ENCODE measurements at regions of chr9 and their contacts with region 1.

Region 1: DNA sequence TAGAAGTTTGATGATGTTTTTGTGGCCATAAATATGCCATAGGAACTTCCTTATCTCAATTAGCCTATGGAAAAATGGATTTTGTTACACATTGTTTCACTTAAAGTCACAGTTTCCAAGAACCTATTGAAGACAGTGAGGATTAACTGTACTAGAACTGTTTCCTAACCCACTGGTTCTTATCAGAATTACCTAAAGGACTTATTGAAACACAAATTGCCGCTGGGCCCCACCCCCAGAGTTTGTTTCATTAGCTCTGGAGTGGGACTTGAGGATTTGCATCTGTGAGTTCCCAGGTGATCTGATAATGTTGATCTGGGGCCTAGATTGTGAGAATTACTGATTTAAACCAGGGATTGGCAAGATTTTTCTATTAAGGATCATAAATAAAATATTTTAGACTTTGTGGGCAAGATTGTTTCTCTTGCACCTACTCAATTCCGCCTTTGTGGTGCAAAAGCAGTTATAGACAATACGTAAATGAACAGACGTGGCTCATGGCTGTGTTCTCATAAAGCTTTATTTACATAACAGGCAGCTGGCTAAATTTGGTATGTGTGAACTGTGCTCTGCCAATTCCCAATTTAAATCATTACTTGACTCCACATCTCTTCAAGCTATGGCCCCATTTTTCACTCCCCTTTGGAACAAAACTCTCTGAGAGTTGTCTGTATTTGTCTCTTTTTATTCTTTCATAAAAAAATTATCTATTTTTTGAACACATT is 9.3 kb downstream of the JAK2 start:
- DNase-seq: no peak
- ATAC-seq: no peak
- H3K4me3 ChIP-seq: no peak overlapping the region
- H3K27ac ChIP-seq: no peak overlapping the region
- H3K4me1 ChIP-seq: peaks cover 0 to 6% (median 0%) of the 10 kb centered on the region in 4 donors
- H3K27me3 ChIP-seq: no peaks in the 10 kb centered on the region
- CTCF ChIP-seq: no peak
- POLR2A ChIP-seq: no peak

Region 2: GRCh38 chr9:4755026-4755609 is 239.2 kb before region 1 on chr9:
- intact Hi-C with region 1: loop called in 1 of 2 experiments (anchors 5 kb)
- DNase-seq: no peak
- ATAC-seq: no peak
- H3K4me3 ChIP-seq: no peak overlapping the region
- H3K27ac ChIP-seq: no peak overlapping the region
- H3K4me1 ChIP-seq: no peaks in the 10 kb centered on the region
- H3K27me3 ChIP-seq: no peaks in the 10 kb centered on the region
- CTCF ChIP-seq: no peak
- POLR2A ChIP-seq: no peak

Region 3: DNA sequence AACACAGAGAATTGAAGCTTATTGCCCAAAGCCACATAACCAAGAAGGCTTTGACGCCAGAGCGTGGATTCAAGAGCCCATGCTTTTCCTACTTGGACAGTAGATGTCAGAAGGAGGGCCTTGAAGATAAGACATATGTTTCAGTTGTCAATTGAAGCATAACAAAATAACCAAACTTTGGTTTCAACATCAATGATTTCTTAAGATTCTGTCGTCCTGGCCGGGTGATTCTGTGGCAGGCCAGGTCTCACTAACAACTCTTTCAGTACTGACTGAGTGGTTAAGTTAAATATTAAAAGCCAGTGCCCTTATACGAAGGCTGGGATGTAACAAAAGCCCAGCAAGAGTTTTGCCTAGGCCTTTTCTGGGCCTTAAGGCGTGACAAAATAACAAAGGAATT is 107.6 kb before region 1 on chr9:
- intact Hi-C with region 1: no loop called
- DNase-seq: no peak
- ATAC-seq: no peak
- H3K4me3 ChIP-seq: no peak overlapping the region
- H3K27ac ChIP-seq: no peak overlapping the region
- H3K4me1 ChIP-seq: no peaks in the 10 kb centered on the region
- H3K27me3 ChIP-seq: no peaks in the 10 kb centered on the region
- CTCF ChIP-seq: no peak
- POLR2A ChIP-seq: no peak

Region 4: DNA sequence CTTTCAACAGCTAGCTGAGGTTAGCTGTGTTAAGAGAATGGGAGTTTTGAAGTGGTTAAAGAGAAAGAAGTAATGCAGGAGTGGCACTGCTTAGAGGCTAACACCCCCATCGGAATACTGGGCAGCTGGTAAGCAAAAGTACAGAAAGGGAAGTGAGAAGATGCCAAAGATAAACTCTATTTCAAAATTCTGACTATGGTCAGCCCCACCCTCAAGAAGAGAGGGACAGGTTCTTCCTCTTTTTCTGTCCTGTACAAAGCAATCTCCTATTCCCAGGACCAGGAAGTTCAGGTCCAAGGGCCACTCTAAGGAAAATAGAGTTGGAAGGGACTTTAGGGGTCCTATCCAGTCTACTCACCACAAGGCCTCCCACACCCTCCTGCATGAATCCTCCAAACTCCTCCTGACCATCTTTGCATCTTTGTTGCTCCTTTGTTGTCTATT is 55.2 kb before region 1 on chr9:
- intact Hi-C with region 1: no loop called
- DNase-seq: no peak
- ATAC-seq: peak; percentile 59 to 75 (median 62)
- H3K4me3 ChIP-seq: no peak overlapping the region
- H3K27ac ChIP-seq: no peak overlapping the region
- H3K4me1 ChIP-seq: no peaks in the 10 kb centered on the region
- H3K27me3 ChIP-seq: no peaks in the 10 kb centered on the region
- CTCF ChIP-seq: no peak
- POLR2A ChIP-seq: no peak